Naive thymus-derived CD4-positive, alpha-beta T cell (primary cell): ENCODE measurements at regions of chr1 and their contacts with region 1.

Region 1: GRCh38 chr1:244296447-244296846 is 155.3 kb downstream of the ADSS2 start:
- DNase-seq: no peak
- ATAC-seq: no peak
- H3K4me3 ChIP-seq: no peak overlapping the region
- H3K4me3 Mint-ChIP-seq: no peak overlapping the region
- H3K27ac ChIP-seq: no peak overlapping the region
- H3K27ac Mint-ChIP-seq: no peak overlapping the region
- H3K4me1 ChIP-seq: peaks cover 0 to 3% of the 10 kb centered on the region in 2 donors
- H3K4me1 Mint-ChIP-seq: peaks cover 6 to 16% (median 8%) of the 10 kb centered on the region in 7 donors
- H3K27me3 ChIP-seq: no peaks in the 10 kb centered on the region
- H3K27me3 Mint-ChIP-seq: peaks cover 0 to 8% (median 0%) of the 10 kb centered on the region in 5 donors

Region 2: GRCh38 chr1:244319283-244320132 is 23.1 kb after region 1 on chr1:
- CTCF ChIA-PET with region 1: no interaction called
- POLR2A ChIA-PET with region 1: interaction called, 3 read pairs
- intact Hi-C with region 1: loop called in 1 of 2 experiments (anchors 1 kb)
- DNase-seq: peak in 1 of 9 donors; percentile 62
- ATAC-seq: peak; percentile 86
- H3K4me3 ChIP-seq: peak overlapping the region; percentile 9
- H3K4me3 Mint-ChIP-seq: peak overlapping the region in 4 of 10 donors; percentile 20 to 76 (median 36)
- H3K27ac ChIP-seq: no peak overlapping the region
- H3K27ac Mint-ChIP-seq: peak overlapping the region in 6 of 9 donors; percentile 20 to 87 (median 53)
- H3K4me1 ChIP-seq: peaks cover 0 to 51% of the 10 kb centered on the region in 2 donors
- H3K4me1 Mint-ChIP-seq: peaks cover 8 to 49% (median 9%) of the 10 kb centered on the region in 7 donors
- H3K27me3 ChIP-seq: no peaks in the 10 kb centered on the region
- H3K27me3 Mint-ChIP-seq: no peaks in the 10 kb centered on the region